ENCODE measurements at regions of chr18 and their contacts with region 1.

Region 1: DNA sequence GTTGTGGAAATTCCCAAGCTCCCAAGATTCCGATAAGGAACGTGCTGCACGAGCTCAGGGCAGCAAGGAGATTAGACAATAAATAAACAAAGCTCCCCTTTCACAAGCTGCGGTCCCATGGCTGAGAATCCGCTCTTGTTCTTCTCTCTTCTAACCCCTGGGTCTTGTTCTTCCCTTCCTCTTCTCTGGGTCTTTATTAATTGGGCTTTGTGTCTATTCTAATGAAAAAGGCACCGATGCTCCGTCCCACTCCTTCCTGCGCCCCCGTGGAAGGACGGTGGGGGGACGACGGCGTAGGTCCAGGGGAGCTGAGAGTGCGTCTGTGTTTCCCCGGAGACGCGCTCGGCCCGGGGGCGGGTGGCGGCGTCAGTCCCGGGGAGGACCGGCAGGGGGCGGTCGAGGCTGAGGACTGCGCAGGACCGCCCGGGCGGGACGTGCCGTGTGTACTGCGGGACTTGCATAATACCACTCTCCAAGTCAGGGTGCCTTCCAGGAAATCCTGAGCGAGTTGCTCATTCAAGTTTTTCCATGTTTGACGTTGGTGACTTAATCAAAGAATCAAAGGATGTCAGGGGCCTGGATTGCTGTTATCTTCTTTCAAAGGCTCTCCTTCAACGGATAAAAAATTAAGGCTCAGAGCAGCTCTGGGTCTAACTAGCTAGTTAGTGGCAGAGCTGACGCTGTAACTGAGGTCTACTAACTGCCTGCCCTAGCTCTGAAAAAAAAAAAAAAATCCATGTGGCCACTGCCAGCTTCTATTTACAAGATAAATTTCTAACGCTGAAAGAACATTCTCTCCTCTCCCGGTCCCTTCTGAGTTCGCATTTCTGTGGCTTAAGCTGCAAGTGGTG is 321.4 kb downstream of the TGIF1 start:
- DNase-seq: peak; percentile 75
- H3K4me3 Mint-ChIP-seq: peak overlapping the region; percentile 57
- H3K27ac Mint-ChIP-seq: no peak overlapping the region
- H3K4me1 Mint-ChIP-seq: peaks cover 6% of the 10 kb centered on the region
- H3K27me3 Mint-ChIP-seq: peaks cover 28% of the 10 kb centered on the region

Region 2: GRCh38 chr18:3869848-3870247 is 98.5 kb after region 1 on chr18:
- intact Hi-C with region 1: loop called (anchors 2 kb)
- DNase-seq: no peak
- H3K4me3 Mint-ChIP-seq: no peak overlapping the region
- H3K27ac Mint-ChIP-seq: no peak overlapping the region
- H3K4me1 Mint-ChIP-seq: no peaks in the 10 kb centered on the region
- H3K27me3 Mint-ChIP-seq: peaks cover 20% of the 10 kb centered on the region

Region 3: GRCh38 chr18:3995476-3996102 is 224.2 kb after region 1 on chr18:
- intact Hi-C with region 1: loop called (anchors 1 kb)
- DNase-seq: peak; percentile 38
- H3K4me3 Mint-ChIP-seq: no peak overlapping the region
- H3K27ac Mint-ChIP-seq: no peak overlapping the region
- H3K4me1 Mint-ChIP-seq: no peaks in the 10 kb centered on the region
- H3K27me3 Mint-ChIP-seq: no peaks in the 10 kb centered on the region

Region 4: DNA sequence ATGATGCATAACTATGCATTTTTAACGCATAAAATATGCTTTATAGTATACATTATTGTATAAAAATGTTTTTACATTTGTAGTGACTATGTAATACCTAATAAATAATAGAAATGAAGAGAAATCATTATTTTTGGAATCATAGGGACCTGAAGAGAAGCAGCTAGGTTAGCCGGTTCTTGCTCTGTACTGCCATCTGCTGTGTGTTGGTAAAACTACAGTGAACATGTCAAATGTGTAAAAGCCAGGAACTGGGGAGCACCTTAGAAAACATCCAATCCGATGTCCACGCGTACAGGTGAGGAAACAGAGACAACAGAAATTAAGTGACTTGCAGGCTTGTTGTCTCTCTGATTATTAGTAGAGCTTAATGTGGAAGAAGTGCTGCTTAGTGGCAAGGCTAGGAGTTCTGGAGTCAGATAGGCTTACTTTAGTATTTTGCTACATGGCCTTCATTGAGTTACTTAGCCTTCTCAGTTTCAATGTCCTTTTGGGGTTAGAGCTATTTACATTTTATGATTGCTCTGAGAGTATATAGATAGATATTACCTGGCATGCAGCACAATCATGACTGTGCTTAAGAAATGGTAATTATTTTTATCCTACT is 297.3 kb after region 1 on chr18:
- intact Hi-C with region 1: loop called (anchors 1 kb)
- DNase-seq: no peak
- H3K4me3 Mint-ChIP-seq: no peak overlapping the region
- H3K27ac Mint-ChIP-seq: no peak overlapping the region
- H3K4me1 Mint-ChIP-seq: no peaks in the 10 kb centered on the region
- H3K27me3 Mint-ChIP-seq: no peaks in the 10 kb centered on the region